ENCODE measurements at regions of chr16 and their contacts with region 1.

Region 1: GRCh38 chr16:89490387-89491237 is at the start of gene ANKRD11:
- DNase-seq: peak; percentile 99
- ATAC-seq: peak; percentile 84
- H3K4me3 ChIP-seq: peak within 1 kb of the TSS; percentile 99
- H3K27ac ChIP-seq: peak within 1 kb of the TSS; percentile 85
- H3K4me1 ChIP-seq: peaks cover 27% of the 10 kb centered on the region
- H3K27me3 ChIP-seq: no peaks in the 10 kb centered on the region
- CTCF ChIP-seq: no peak
- EP300 ChIP-seq: 0 out of 4 replicates have a peak, but pooled peaks of 1 of the 2 experiments have one; percentile 9
- POLR2A ChIP-seq: peak; percentile 86
- RAD21 ChIP-seq: no peak
- polyA plus RNA-seq, gene ANKRD11: 5.1 to 8.7 TPM

Region 2: GRCh38 chr16:89241187-89242007 is 249.2 kb before region 1 on chr16:
- CTCF ChIA-PET with region 1: no interaction called
- POLR2A ChIA-PET with region 1: no interaction called
- RAD21 ChIA-PET with region 1: no interaction called
- SMC1A ChIA-PET with region 1: interaction called, 3 read pairs
- in situ Hi-C with region 1: no loop called
- intact Hi-C with region 1: loop called (anchors 5 kb)
- DNase-seq: peak; percentile 57
- ATAC-seq: peak; percentile 86
- H3K4me3 ChIP-seq: peak overlapping the region; percentile 72
- H3K27ac ChIP-seq: peak overlapping the region; percentile 96
- H3K4me1 ChIP-seq: no peaks in the 10 kb centered on the region; the same call in 1 of the 2 replicates
- H3K27me3 ChIP-seq: no peaks in the 10 kb centered on the region
- CTCF ChIP-seq: no peak
- EP300 ChIP-seq: no peak
- POLR2A ChIP-seq: peak; percentile 94
- RAD21 ChIP-seq: no peak

Region 3: GRCh38 chr16:89330177-89330856 is 160.3 kb before region 1 on chr16:
- CTCF ChIA-PET with region 1: no interaction called
- POLR2A ChIA-PET with region 1: no interaction called
- RAD21 ChIA-PET with region 1: interaction called, 6 read pairs
- SMC1A ChIA-PET with region 1: interaction called, 5 read pairs
- in situ Hi-C with region 1: no loop called
- intact Hi-C with region 1: loop called (anchors 5 kb)
- DNase-seq: no peak
- ATAC-seq: no peak
- H3K4me3 ChIP-seq: no peak overlapping the region
- H3K27ac ChIP-seq: no peak overlapping the region
- H3K4me1 ChIP-seq: peaks cover 39% of the 10 kb centered on the region
- H3K27me3 ChIP-seq: no peaks in the 10 kb centered on the region
- CTCF ChIP-seq: no peak
- EP300 ChIP-seq: no peak
- POLR2A ChIP-seq: peak; percentile 35; the same call in 1 of the 2 replicates
- RAD21 ChIP-seq: no peak

Region 4: DNA sequence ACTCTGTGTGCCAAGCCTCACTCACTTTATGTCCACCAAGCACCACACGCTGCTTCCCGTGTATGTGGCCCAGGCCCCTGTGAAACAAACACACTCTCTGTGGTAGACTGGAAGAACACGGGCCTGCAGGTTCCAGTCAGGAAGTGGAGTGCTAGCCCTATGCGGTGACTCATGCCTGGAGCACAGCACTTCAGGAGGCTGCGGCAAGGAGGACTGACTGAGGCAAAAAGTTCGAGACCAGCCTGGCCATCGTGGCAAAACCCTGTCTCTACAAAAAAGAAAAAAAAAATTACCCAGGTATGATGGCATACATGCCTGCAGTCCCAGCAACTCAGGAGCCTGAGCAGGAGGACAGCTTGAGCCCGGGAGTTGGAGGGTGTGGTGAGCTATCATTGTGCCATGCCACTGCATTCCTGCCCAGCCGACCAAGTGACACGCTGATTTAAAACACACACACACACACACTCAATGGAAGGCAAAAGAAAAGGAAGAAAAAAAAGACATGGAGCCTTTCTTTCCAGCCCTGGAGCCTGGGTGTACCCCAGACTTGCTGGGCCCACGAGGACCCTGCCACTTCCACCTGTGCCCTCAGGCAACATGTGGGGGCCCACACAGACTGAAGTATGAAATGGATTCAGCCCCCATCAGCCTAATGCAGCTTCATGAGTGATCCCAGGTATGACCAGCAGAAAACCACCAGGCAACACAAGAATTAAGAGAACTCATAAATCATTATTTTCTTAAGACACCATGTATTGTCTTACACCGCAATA is 126.8 kb before region 1 on chr16:
- CTCF ChIA-PET with region 1: no interaction called
- POLR2A ChIA-PET with region 1: interaction called, 4 read pairs
- RAD21 ChIA-PET with region 1: interaction called, 4 read pairs
- SMC1A ChIA-PET with region 1: interaction called, 10 read pairs
- in situ Hi-C with region 1: no loop called
- intact Hi-C with region 1: loop called (anchors 5 kb)
- DNase-seq: no peak
- ATAC-seq: no peak
- H3K4me3 ChIP-seq: no peak overlapping the region
- H3K27ac ChIP-seq: peak overlapping the region; percentile 49
- H3K4me1 ChIP-seq: peaks cover 81% of the 10 kb centered on the region
- H3K27me3 ChIP-seq: no peaks in the 10 kb centered on the region
- CTCF ChIP-seq: no peak
- EP300 ChIP-seq: no peak
- POLR2A ChIP-seq: no peak
- RAD21 ChIP-seq: no peak

Region 5: GRCh38 chr16:89476804-89477261 is 13.8 kb before region 1 on chr16:
- CTCF ChIA-PET with region 1: interaction called, 4 read pairs
- POLR2A ChIA-PET with region 1: interaction called, 6 read pairs
- RAD21 ChIA-PET with region 1: interaction called, 17 read pairs
- SMC1A ChIA-PET with region 1: interaction called, 6 read pairs
- in situ Hi-C with region 1: no loop called
- intact Hi-C with region 1: no loop called
- DNase-seq: peak; percentile 62
- ATAC-seq: peak; percentile 86
- H3K4me3 ChIP-seq: peak overlapping the region; percentile 57; the same call in 1 of the 2 replicates
- H3K27ac ChIP-seq: peak overlapping the region; percentile 62
- H3K4me1 ChIP-seq: peaks cover 47% of the 10 kb centered on the region
- H3K27me3 ChIP-seq: no peaks in the 10 kb centered on the region
- CTCF ChIP-seq: no peak
- EP300 ChIP-seq: no peak
- POLR2A ChIP-seq: no peak; the same call in 1 of the 2 replicates
- RAD21 ChIP-seq: no peak

Region 6: DNA sequence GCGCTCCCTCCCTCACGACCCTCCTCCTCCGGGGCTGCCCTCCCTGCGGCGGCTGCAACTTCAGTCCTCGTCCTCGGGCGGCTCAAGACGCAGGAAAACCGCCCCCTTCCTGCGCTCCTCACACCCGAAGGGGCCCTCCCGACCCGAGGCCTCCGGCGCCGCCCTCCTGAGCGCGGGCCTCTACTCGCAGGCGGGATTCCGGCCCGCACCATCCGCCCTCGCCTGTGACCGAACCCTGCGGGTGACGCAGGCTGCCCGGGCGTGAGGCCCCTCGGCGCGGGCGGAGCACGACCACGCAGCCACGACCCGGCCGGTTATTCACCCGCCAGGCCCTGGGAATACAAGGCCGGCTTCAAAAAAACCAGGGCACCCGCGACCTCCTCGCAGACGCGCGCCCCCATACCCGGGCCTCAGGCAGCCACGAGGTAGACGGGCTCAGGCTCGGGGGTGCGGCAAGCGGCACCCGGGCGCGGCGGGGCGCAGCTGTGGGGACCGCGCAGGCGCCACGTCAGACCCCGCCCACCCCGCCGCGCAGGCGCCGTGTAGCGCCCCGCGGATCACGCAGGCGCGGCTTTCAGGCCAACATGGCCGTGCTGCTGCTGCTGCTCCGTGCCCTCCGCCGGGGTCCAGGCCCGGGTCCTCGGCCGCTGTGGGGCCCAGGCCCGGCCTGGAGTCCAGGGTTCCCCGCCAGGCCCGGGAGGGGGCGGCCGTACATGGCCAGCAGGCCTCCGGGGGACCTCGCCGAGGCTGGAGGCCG is 17.4 kb after region 1 on chr16 and contains the start of gene SPG7:
- CTCF ChIA-PET with region 1: interaction called, 6 read pairs
- POLR2A ChIA-PET with region 1: interaction called, 7 read pairs
- RAD21 ChIA-PET with region 1: interaction called, 8 read pairs
- SMC1A ChIA-PET with region 1: interaction called, 5 read pairs
- in situ Hi-C with region 1: no loop called
- intact Hi-C with region 1: loop called (anchors 2 kb)
- DNase-seq: peak; percentile 51
- ATAC-seq: peak; percentile 87
- H3K4me3 ChIP-seq: peak within 1 kb of the TSS; percentile 96
- H3K27ac ChIP-seq: peak within 1 kb of the TSS; percentile 80
- H3K4me1 ChIP-seq: peaks cover 21% of the 10 kb centered on the region
- H3K27me3 ChIP-seq: no peaks in the 10 kb centered on the region
- CTCF ChIP-seq: no peak
- EP300 ChIP-seq: no peak
- POLR2A ChIP-seq: peak; percentile 85
- RAD21 ChIP-seq: no peak
- polyA plus RNA-seq, gene SPG7: 5.9 to 9.8 TPM

Region 7: GRCh38 chr16:89560378-89561141 is 69.9 kb after region 1 on chr16 and contains the start of gene RPL13:
- CTCF ChIA-PET with region 1: interaction called, 3 read pairs
- POLR2A ChIA-PET with region 1: no interaction called
- RAD21 ChIA-PET with region 1: no interaction called
- SMC1A ChIA-PET with region 1: interaction called, 3 read pairs
- in situ Hi-C with region 1: no loop called
- intact Hi-C with region 1: loop called (anchors 5 kb)
- DNase-seq: peak; percentile 67
- ATAC-seq: peak; percentile 90
- H3K4me3 ChIP-seq: peak within 1 kb of the TSS; percentile 89
- H3K27ac ChIP-seq: peak within 1 kb of the TSS; percentile 81
- H3K4me1 ChIP-seq: peaks cover 20% of the 10 kb centered on the region
- H3K27me3 ChIP-seq: no peaks in the 10 kb centered on the region
- CTCF ChIP-seq: no peak
- EP300 ChIP-seq: no peak
- POLR2A ChIP-seq: peak; percentile 99
- RAD21 ChIP-seq: no peak
- polyA plus RNA-seq, gene RPL13: 386 to 1,247 TPM

Region 8: GRCh38 chr16:89779231-89779908 is 288.8 kb after region 1 on chr16:
- CTCF ChIA-PET with region 1: no interaction called
- POLR2A ChIA-PET with region 1: no interaction called
- RAD21 ChIA-PET with region 1: no interaction called
- SMC1A ChIA-PET with region 1: no interaction called
- in situ Hi-C with region 1: no loop called
- intact Hi-C with region 1: no loop called
- DNase-seq: no peak
- ATAC-seq: no peak
- H3K4me3 ChIP-seq: no peak overlapping the region
- H3K27ac ChIP-seq: no peak overlapping the region
- H3K4me1 ChIP-seq: no peaks in the 10 kb centered on the region
- H3K27me3 ChIP-seq: no peaks in the 10 kb centered on the region
- CTCF ChIP-seq: no peak
- EP300 ChIP-seq: no peak
- POLR2A ChIP-seq: no peak
- RAD21 ChIP-seq: no peak